Mammary epithelial cell (primary cell): ENCODE measurements at regions of chr10 and their contacts with region 1.

Region 1: DNA sequence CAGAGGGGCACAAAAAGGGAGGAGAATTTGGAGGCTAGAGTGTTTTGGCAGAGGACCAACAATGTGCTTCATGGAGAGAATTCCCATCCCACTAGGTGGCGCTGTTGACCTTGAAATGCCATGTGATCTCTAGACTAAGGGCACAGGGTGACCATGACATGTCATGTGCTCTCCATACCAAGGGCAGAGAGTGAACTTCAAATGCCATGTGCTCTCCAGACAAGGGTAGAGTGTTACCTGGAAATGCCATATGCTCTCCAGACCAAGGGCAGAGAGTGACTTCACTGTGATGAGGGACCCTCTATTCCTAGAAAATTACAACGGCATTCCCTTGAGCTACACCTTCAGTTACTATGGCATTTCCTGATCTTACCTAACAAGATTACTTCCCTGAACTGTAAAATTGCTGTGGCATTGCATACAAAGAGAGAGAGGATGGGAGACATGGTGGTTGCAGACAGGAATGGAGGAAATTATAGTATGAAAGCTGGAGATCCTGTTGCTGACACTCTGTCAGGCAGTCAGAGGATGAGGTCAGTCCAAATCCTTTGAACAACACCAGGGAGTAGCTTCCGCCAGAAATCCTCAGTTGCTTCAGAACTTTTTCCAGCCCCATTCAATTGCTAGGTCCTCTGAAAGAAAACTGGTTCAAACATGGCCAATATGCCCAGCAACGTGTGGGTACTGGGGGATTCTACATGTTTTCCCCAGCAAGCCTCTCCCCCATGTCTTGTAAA is 60.9 kb upstream of the ACSM6 start:
- DNase-seq: peak; percentile 64
- H3K4me3 ChIP-seq: no peak overlapping the region
- H3K27ac ChIP-seq: no peak overlapping the region
- H3K4me1 ChIP-seq: no peaks in the 10 kb centered on the region
- H3K27me3 ChIP-seq: no peaks in the 10 kb centered on the region
- CTCF ChIP-seq: peak; percentile 84

Region 2: DNA sequence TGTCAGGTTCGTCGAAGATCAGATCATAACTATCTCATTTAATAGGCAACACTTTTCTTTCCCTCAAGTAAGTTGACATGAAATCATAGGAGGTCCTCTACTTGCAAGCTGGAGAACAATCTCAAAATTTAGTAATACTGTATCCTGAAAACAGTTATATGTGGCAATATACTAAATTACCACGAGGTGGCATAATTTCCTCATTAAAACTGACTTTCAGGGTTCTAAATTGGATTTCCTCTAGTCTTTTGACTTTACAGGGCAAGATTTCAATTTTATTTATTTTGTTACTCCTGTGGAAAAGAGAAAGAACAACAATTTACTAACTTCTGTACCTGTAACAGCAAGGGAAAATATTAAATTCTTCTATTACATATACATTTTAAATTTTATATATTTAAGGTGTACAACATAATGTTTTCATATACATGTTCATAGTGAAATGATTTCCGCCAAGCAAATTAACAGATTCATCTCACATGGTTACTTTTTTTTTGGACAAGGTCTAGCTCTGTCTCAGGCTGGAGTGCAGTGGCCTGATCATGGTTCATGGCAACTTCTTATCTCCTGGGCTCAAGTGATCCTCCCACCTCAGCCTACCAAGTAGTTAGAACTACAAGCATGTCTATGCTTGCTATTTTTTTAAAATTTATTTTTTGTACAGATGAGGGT is 503.0 kb before region 1 on chr10:
- CTCF ChIA-PET with region 1: no interaction called
- dilution Hi-C with region 1: no loop called
- in situ Hi-C with region 1: no loop called
- intact Hi-C with region 1: loop called (anchors 1 kb)
- DNase-seq: peak; percentile 8
- H3K4me3 ChIP-seq: no peak overlapping the region
- H3K27ac ChIP-seq: no peak overlapping the region
- H3K4me1 ChIP-seq: no peaks in the 10 kb centered on the region
- H3K27me3 ChIP-seq: no peaks in the 10 kb centered on the region
- CTCF ChIP-seq: peak; percentile 53 to 63

Region 3: GRCh38 chr10:95077556-95077955 is 55.6 kb before region 1 on chr10:
- CTCF ChIA-PET with region 1: no interaction called
- dilution Hi-C with region 1: no loop called
- in situ Hi-C with region 1: no loop called
- intact Hi-C with region 1: no loop called
- DNase-seq: no peak
- H3K4me3 ChIP-seq: no peak overlapping the region
- H3K27ac ChIP-seq: no peak overlapping the region
- H3K4me1 ChIP-seq: no peaks in the 10 kb centered on the region
- H3K27me3 ChIP-seq: no peaks in the 10 kb centered on the region
- CTCF ChIP-seq: no peak

Region 4: GRCh38 chr10:95176101-95176500 is 42.9 kb after region 1 on chr10:
- CTCF ChIA-PET with region 1: no interaction called
- dilution Hi-C with region 1: no loop called
- in situ Hi-C with region 1: no loop called
- intact Hi-C with region 1: loop called (anchors 1 kb)
- DNase-seq: no peak
- H3K4me3 ChIP-seq: no peak overlapping the region
- H3K27ac ChIP-seq: no peak overlapping the region
- H3K4me1 ChIP-seq: peaks cover 5% of the 10 kb centered on the region
- H3K27me3 ChIP-seq: no peaks in the 10 kb centered on the region
- CTCF ChIP-seq: peak; percentile 23 to 47

Region 5: DNA sequence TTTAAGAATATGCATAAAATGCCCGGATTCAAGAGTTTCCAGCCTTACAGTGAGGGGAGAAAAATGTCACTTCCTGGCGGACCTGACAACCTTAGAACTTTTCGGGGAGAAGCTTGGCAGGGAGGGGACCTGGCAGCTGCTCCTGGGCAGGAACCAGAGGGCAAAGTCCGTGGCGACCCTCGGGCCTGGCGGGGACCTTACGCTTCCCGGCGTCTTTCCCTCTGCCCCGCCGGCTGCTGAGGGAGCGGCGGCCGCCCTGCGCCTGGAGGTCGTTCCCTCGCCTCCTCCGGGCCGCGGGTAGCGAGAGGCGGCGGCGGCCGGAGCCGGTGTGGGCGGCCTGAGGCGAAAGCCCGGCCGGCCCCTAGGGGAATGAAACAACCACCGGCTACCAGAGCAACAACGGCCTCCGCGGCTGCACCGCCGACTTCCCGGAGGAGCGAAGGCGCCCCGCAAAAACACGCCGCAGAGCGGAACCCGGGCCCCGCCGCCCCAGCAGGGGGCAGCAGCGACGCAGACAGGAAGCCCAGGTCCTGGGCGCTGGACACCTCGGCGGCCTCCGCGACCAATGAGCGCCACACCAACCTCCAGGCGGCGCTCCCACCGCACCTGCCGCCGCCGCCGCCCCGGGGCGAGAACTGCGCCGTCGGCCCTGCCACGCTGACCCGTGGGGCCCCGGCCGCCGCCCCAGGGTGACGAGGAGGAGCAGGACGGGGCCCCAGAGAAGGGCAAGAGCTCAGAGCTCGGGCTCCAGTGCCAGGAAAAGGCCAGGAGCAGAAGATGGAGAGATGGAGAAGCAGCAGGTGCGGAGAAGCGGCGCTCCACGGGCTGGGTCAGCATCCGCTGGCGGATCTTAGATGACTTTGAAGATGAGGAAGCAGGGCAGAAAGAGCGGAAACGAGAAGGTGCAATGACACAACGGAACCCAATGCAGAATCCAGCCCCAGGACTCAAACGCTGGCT is 50.4 kb after region 1 on chr10:
- CTCF ChIA-PET with region 1: interaction called, 3 read pairs
- dilution Hi-C with region 1: loop called (anchors 5 kb)
- in situ Hi-C with region 1: no loop called
- intact Hi-C with region 1: loop called (anchors 1 kb)
- DNase-seq: peak; percentile 70
- H3K4me3 ChIP-seq: peak overlapping the region; percentile 58 to 66 (median 66)
- H3K27ac ChIP-seq: no peak overlapping the region
- H3K4me1 ChIP-seq: peaks cover 4% of the 10 kb centered on the region
- H3K27me3 ChIP-seq: no peaks in the 10 kb centered on the region
- CTCF ChIP-seq: peak; percentile 49 to 74

Region 6: DNA sequence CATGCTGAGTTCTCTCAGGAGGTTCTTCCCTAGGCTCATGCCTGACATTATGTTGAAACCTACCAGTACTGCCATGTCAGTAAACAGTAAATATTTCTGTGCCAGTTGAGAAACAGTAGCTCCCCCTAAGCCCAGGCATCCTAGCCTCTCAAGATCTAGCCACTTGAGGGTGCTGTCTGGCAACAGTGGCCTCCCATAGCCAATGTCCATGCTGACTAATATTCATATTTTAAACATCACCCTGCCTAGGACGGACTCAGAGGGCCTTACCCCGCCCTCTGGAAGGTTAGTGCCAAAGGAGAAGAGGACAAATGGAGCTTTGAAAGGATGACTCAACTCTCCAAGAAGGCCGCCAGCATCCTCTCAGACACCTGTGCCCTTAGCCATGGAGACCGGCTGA is 68.6 kb after region 1 on chr10:
- CTCF ChIA-PET with region 1: no interaction called
- dilution Hi-C with region 1: no loop called
- in situ Hi-C with region 1: no loop called
- intact Hi-C with region 1: loop called (anchors 1 kb)
- DNase-seq: peak; percentile 89
- H3K4me3 ChIP-seq: no peak overlapping the region
- H3K27ac ChIP-seq: no peak overlapping the region
- H3K4me1 ChIP-seq: no peaks in the 10 kb centered on the region
- H3K27me3 ChIP-seq: no peaks in the 10 kb centered on the region
- CTCF ChIP-seq: peak; percentile 78 to 81

Region 7: GRCh38 chr10:95248989-95249388 is 115.8 kb after region 1 on chr10:
- CTCF ChIA-PET with region 1: no interaction called
- dilution Hi-C with region 1: no loop called
- in situ Hi-C with region 1: no loop called
- intact Hi-C with region 1: no loop called
- DNase-seq: no peak
- H3K4me3 ChIP-seq: no peak overlapping the region
- H3K27ac ChIP-seq: no peak overlapping the region
- H3K4me1 ChIP-seq: peaks cover 28% of the 10 kb centered on the region
- H3K27me3 ChIP-seq: no peaks in the 10 kb centered on the region
- CTCF ChIP-seq: no peak